ENCODE measurements at regions of chr11 and their contacts with region 1.

Region 1: DNA sequence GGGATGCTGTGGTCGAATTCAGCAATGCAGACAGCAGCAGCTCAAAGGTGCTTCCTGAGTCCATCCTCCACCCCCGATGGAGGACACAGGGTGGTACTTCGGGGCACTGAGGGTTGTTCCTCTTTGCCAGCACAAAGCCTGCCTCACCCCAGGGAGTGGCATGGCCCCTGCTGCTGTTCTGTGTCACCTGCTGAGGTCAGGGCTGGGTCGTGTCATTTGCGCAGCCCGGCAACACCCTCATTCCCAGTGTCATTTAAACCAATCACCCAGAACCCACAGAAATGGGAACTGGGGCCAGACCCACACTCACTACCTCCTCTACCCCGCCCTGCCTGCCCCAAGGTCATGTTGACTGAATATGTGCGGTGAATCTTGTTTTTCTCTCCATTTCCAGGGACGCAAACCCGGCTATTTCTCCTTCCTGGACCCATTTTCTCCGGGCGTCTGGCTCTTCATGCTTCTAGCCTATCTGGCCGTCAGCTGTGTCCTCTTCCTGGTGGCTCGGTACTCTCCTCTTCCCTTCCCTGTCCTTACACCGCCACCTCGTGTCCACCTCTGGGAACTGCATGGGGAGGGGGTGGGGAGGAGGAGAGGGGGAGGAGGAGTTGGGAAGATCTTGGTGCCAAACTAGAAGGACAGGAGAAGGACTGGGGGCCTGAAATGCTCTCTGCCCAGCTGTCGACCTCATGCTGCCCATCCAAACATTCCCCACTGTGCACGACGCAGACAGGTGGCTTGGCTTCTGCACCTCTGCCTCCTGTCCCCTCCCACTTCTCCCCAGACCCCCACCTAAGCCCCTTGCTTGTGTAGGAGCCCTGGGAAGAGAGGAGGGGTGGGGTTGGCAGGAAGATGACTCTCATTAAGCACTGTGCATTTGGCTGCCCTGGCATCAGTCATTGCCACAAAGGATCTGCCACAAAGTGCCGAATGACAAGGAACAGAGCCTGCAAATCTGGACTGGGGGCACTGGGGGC is 71.2 kb upstream of the TBCEL start:
- H3K4me3 ChIP-seq: no peak overlapping the region
- H3K27ac ChIP-seq: no peak overlapping the region
- H3K4me1 ChIP-seq: no peaks in the 10 kb centered on the region
- CTCF ChIP-seq: peak; percentile 23; the same call in 1 of the 2 replicates

Region 2: GRCh38 chr11:120511116-120511819 is 441.5 kb before region 1 on chr11 and contains the start of gene GRIK4:
- CTCF ChIA-PET with region 1: interaction called, 10 read pairs
- POLR2A ChIA-PET with region 1: no interaction called
- H3K4me3 ChIP-seq: peak within 1 kb of the TSS; percentile 42
- H3K27ac ChIP-seq: peak within 1 kb of the TSS; percentile 53; the same call in 1 of the 2 replicates
- H3K4me1 ChIP-seq: no peaks in the 10 kb centered on the region
- CTCF ChIP-seq: peak; percentile 90

Region 3: DNA sequence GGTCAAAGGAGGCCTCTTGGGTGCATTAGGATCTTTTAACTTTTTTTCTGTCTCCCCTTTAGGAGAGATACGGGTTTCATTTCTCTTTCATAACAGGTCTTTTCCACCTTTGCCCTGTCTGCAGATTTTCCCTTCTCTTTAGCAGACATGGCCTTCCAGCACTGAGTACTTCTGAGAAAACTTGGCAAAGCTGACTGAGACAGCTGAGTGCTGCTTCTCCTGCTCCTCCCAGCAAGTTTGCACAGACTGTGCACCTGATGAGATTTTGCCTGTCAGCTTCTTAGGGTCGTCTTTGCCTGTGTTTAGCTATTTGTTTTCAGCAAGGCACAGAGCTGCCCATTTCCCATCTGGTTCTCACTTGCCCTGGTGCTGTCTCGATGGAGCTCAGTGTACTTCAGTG is 16.4 kb before region 1 on chr11:
- CTCF ChIA-PET with region 1: interaction called, 12 read pairs
- POLR2A ChIA-PET with region 1: no interaction called
- H3K4me3 ChIP-seq: no peak overlapping the region
- H3K27ac ChIP-seq: no peak overlapping the region
- H3K4me1 ChIP-seq: no peaks in the 10 kb centered on the region
- CTCF ChIP-seq: no peak